HCT116 (cell line): ENCODE measurements at regions of chr11 and their contacts with region 1.

Region 1: DNA sequence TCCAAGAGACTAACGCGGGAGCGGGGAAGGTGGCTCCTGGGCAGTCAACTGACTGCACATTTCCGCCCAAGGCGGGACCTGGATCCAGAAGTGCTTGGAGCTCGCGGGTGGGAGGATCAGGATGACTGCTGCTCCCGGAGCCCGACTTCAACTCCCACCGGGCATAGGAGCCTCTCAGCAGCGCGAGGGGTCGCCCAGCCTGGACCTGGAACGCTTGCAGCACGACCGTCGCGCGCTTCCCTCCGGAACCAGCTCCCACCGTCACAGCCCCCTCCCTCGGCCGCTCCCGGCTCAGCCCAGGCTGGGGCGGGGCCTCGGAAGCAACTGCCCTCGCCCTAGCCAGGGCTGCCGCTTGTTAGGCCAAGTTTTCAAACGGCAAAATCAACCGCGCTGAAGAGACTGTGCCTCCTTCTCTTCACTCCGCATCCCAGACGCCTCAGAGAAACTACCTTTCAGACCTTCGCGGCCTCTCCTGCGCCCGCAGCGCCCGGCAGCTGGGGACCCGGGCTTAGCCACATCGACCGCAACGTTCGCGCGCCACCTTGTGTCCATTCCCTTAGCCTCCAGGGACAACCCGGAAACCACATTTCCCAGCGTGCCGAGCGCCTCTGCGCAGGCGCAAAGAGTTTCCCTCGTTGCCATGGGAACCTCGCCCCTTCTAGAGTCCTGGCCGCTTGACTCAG is 14.0 kb downstream of the SSH3 start:
- DNase-seq: peak; percentile 90
- ATAC-seq: peak; percentile 88
- H3K4me3 ChIP-seq: peak overlapping the region; percentile 81 to 90
- H3K27ac ChIP-seq: peak overlapping the region; percentile 87
- H3K4me1 ChIP-seq: peaks cover 11 to 28% of the 10 kb centered on the region in 2 experiments; a peak in 3 of 4 replicates
- H3K27me3 ChIP-seq: no peaks in the 10 kb centered on the region
- CTCF ChIP-seq: peak; percentile 85 to 97 (median 87)
- POLR2A ChIP-seq: peak; percentile 55
- RAD21 ChIP-seq: peak; percentile 99

Region 2: GRCh38 chr11:67053896-67054842 is 263.2 kb before region 1 on chr11:
- CTCF ChIA-PET with region 1: interaction called, 16 read pairs
- POLR2A ChIA-PET with region 1: interaction called, 3 read pairs
- RAD21 ChIA-PET with region 1: no interaction called
- intact Hi-C with region 1: loop called (anchors 2 kb)
- DNase-seq: no peak
- ATAC-seq: peak; percentile 65
- H3K4me3 ChIP-seq: no peak overlapping the region
- H3K27ac ChIP-seq: peak overlapping the region; percentile 47
- H3K4me1 ChIP-seq: peaks cover 24 to 50% of the 10 kb centered on the region in 2 experiments
- H3K27me3 ChIP-seq: no peaks in the 10 kb centered on the region
- CTCF ChIP-seq: peak in 2 of 3 experiments; percentile 89; a peak in 4 of 6 replicates
- POLR2A ChIP-seq: no peak
- RAD21 ChIP-seq: no peak

Region 3: GRCh38 chr11:67082035-67082791 is 235.1 kb before region 1 on chr11:
- CTCF ChIA-PET with region 1: interaction called, 22 read pairs
- POLR2A ChIA-PET with region 1: no interaction called
- RAD21 ChIA-PET with region 1: interaction called, 4 to 5 read pairs
- intact Hi-C with region 1: loop called (anchors 1 kb)
- DNase-seq: no peak
- ATAC-seq: peak; percentile 16
- H3K4me3 ChIP-seq: peak overlapping the region in 1 of 2 experiments; percentile 24; a peak in 2 of 4 replicates
- H3K27ac ChIP-seq: no peak overlapping the region
- H3K4me1 ChIP-seq: peaks cover 25 to 40% of the 10 kb centered on the region in 2 experiments
- H3K27me3 ChIP-seq: no peaks in the 10 kb centered on the region
- CTCF ChIP-seq: peak in 1 of 3 experiments; percentile 20; a peak in 1 of 6 replicates
- POLR2A ChIP-seq: no peak
- RAD21 ChIP-seq: peak; percentile 20; the same call in 1 of the 2 replicates

Region 4: DNA sequence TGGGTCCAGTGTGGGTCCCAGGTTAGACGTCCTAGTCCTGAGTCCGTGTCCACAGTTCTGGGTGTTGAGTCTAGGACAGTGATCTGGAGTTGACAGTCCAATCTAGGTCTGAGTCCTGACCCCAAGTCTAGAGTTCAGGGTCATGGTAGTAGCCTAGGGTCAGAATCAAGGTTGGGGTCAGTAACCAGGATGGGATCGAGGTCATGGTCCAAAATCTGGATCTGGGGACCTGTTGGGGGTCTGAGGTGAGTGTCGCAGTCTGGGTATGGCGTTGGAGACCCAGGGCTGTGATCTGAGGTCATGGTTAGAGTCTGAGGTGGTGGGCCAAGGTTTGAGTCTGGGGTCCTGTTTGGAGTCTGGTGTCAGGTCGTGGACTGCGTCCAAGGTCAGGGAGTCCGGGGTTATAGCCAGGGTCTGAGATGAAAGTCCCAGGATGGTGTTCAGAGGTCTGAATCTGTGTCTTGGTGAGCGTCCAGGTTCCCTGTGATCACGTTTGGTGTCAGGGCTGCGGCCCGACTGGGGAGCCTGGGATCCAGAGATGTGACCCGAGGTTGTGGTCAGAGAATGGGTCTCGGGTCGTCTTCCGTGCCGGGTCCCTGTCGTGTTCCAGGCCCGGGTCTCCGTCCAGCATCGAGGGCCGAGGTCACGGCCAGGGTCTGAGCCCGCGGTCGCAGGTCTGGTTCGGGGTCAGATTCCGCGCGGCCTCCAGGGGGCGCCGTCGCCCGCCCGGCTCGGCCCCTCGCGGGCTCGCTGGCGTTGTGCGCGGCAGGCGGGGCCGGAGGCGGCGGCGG is 51.5 kb before region 1 on chr11:
- CTCF ChIA-PET with region 1: interaction called, 60 read pairs
- POLR2A ChIA-PET with region 1: interaction called, 7 read pairs
- RAD21 ChIA-PET with region 1: interaction called, 4 to 5 read pairs
- intact Hi-C with region 1: loop called (anchors 1 kb)
- DNase-seq: no peak
- ATAC-seq: peak; percentile 76
- H3K4me3 ChIP-seq: peak overlapping the region; percentile 22 to 47
- H3K27ac ChIP-seq: peak overlapping the region; percentile 84; the same call in 1 of the 2 replicates
- H3K4me1 ChIP-seq: peaks cover 14 to 43% of the 10 kb centered on the region in 2 experiments; a peak in 3 of 4 replicates
- H3K27me3 ChIP-seq: no peaks in the 10 kb centered on the region
- CTCF ChIP-seq: peak in 2 of 3 experiments; percentile 59 to 68; a peak in 4 of 6 replicates
- POLR2A ChIP-seq: no peak
- RAD21 ChIP-seq: no peak; the same call in 1 of the 2 replicates

Region 5: DNA sequence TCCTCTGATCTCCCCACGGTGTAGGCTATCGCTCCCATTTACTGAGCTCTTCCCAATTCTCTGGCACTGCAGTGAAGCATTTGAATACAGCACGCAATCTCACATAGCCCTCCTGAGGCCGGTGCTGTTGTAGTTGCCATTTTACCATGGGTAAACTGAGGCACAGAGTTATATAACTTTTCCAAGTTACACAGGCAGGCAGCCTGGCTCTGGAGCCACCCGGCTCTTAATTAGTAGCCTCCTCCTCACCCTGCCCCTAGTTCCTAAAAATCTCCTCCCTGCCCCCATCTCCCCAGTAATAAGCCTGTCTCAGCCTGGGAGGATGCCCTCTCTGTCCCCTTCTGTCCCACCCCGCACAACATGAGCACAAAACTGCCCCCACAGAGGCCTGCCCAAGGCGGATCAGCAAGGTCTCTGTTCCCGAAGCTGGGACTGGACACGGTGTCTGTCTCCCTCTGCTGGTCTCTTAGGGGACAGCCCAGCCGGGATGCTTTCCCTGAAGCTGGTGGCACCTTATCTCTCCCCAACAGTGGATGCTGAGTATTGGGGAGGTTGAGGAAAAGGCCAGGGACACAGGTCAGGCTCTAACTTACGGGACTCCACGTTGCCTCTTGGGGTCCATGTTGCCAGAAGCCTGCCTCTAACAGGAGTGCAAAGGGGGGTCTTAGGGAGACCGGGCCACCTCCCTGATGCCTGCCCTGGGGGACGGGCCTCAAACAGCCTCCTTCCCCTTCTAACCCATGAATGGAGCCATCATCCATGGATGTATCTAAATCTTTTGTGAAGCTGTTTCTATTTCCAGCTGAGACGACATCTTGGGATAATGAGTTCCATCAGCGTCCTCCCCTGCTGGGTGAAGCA is 65.2 kb after region 1 on chr11:
- CTCF ChIA-PET with region 1: interaction called, 21 read pairs
- POLR2A ChIA-PET with region 1: no interaction called
- RAD21 ChIA-PET with region 1: interaction called in 1 of 2 experiments, 8 read pairs
- intact Hi-C with region 1: no loop called
- DNase-seq: peak; percentile 69
- ATAC-seq: peak; percentile 74
- H3K4me3 ChIP-seq: no peak overlapping the region
- H3K27ac ChIP-seq: no peak overlapping the region
- H3K4me1 ChIP-seq: peaks cover 54 to 64% of the 10 kb centered on the region in 2 experiments
- H3K27me3 ChIP-seq: no peaks in the 10 kb centered on the region
- CTCF ChIP-seq: peak in 2 of 3 experiments; percentile 98; a peak in 4 of 6 replicates
- POLR2A ChIP-seq: no peak
- RAD21 ChIP-seq: no peak

Region 6: GRCh38 chr11:67606492-67607201 is 289.3 kb after region 1 on chr11 and contains the start of gene NDUFV1:
- CTCF ChIA-PET with region 1: no interaction called
- POLR2A ChIA-PET with region 1: no interaction called
- RAD21 ChIA-PET with region 1: no interaction called
- intact Hi-C with region 1: no loop called
- DNase-seq: peak; percentile 85
- ATAC-seq: peak; percentile 99
- H3K4me3 ChIP-seq: peak within 1 kb of the TSS; percentile 99 to 100
- H3K27ac ChIP-seq: peak within 1 kb of the TSS; percentile 77
- H3K4me1 ChIP-seq: peaks cover 6 to 20% of the 10 kb centered on the region in 2 experiments
- H3K27me3 ChIP-seq: no peaks in the 10 kb centered on the region
- CTCF ChIP-seq: peak in 2 of 3 experiments; percentile 12 to 37; a peak in 2 of 6 replicates
- POLR2A ChIP-seq: peak; percentile 53
- RAD21 ChIP-seq: no peak
- total RNA-seq, gene NDUFV1: 242 TPM